HepG2 (cell line): ENCODE measurements at regions of chr15 and their contacts with region 1.

Region 1: GRCh38 chr15:46496491-46497115 is 861.8 kb downstream of the SQOR start:
- DNase-seq: no peak
- ATAC-seq: no peak
- H3K4me3 ChIP-seq: no peak overlapping the region
- H3K27ac ChIP-seq: no peak overlapping the region
- H3K4me1 ChIP-seq: no peaks in the 10 kb centered on the region
- H3K27me3 ChIP-seq: no peaks in the 10 kb centered on the region
- CTCF ChIP-seq: no peak
- EP300 ChIP-seq: no peak
- POLR2A ChIP-seq: no peak
- RAD21 ChIP-seq: no peak

Region 2: GRCh38 chr15:46518381-46518780 is 21.8 kb after region 1 on chr15:
- CTCF ChIA-PET with region 1: no interaction called
- POLR2A ChIA-PET with region 1: no interaction called
- in situ Hi-C with region 1: no loop called
- intact Hi-C with region 1: no loop called
- DNase-seq: no peak
- ATAC-seq: no peak
- H3K4me3 ChIP-seq: no peak overlapping the region
- H3K27ac ChIP-seq: no peak overlapping the region
- H3K4me1 ChIP-seq: no peaks in the 10 kb centered on the region
- H3K27me3 ChIP-seq: no peaks in the 10 kb centered on the region
- CTCF ChIP-seq: no peak
- EP300 ChIP-seq: no peak
- POLR2A ChIP-seq: no peak
- RAD21 ChIP-seq: no peak

Region 3: GRCh38 chr15:46556559-46557379 is 60.2 kb after region 1 on chr15:
- CTCF ChIA-PET with region 1: no interaction called
- POLR2A ChIA-PET with region 1: no interaction called
- in situ Hi-C with region 1: loop called (anchors 10 kb)
- intact Hi-C with region 1: no loop called
- DNase-seq: no peak
- ATAC-seq: no peak
- H3K4me3 ChIP-seq: no peak overlapping the region
- H3K27ac ChIP-seq: no peak overlapping the region
- H3K4me1 ChIP-seq: peaks cover 12% of the 10 kb centered on the region; the same call in 1 of the 2 replicates
- H3K27me3 ChIP-seq: no peaks in the 10 kb centered on the region
- CTCF ChIP-seq: no peak
- EP300 ChIP-seq: no peak
- POLR2A ChIP-seq: no peak
- RAD21 ChIP-seq: no peak